ENCODE measurements at regions of chr10 and their contacts with region 1.

Region 1: GRCh38 chr10:15419279-15419874 is 48.3 kb upstream of the FAM171A1 start:
- DNase-seq: peak; percentile 71
- H3K4me3 ChIP-seq: no peak overlapping the region
- H3K27ac ChIP-seq: no peak overlapping the region
- H3K4me1 ChIP-seq: no peaks in the 10 kb centered on the region
- H3K27me3 ChIP-seq: peaks cover 0 to 2% of the 10 kb centered on the region in 2 experiments
- CTCF ChIP-seq: peak; percentile 71 to 74
- POLR2A ChIP-seq: no peak

Region 2: DNA sequence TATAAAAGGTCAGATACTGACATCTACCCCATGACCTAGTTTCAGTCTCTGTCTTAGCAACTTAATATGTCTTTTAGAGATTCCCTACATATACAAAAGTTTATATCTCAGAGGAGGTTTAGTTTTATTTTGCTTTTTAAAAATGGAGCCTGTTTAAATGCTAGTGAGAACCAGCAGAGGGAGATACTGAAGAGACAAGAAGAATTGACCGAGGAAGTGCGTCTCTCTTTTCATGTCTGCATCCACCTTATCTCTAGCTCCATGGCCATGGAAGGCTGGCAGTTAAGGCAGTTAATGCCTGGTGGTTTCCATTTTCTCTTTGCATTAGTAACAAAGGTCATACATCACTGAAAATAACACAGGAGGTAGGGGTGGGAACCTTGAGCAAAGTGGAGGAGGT is 530.1 kb before region 1 on chr10:
- CTCF ChIA-PET with region 1: no interaction called
- POLR2A ChIA-PET with region 1: no interaction called
- dilution Hi-C with region 1: no loop called
- intact Hi-C with region 1: no loop called
- DNase-seq: peak; percentile 4
- H3K4me3 ChIP-seq: no peak overlapping the region
- H3K27ac ChIP-seq: no peak overlapping the region
- H3K4me1 ChIP-seq: no peaks in the 10 kb centered on the region
- H3K27me3 ChIP-seq: no peaks in the 10 kb centered on the region
- CTCF ChIP-seq: peak in 1 of 2 donors; percentile 16
- POLR2A ChIP-seq: no peak

Region 3: DNA sequence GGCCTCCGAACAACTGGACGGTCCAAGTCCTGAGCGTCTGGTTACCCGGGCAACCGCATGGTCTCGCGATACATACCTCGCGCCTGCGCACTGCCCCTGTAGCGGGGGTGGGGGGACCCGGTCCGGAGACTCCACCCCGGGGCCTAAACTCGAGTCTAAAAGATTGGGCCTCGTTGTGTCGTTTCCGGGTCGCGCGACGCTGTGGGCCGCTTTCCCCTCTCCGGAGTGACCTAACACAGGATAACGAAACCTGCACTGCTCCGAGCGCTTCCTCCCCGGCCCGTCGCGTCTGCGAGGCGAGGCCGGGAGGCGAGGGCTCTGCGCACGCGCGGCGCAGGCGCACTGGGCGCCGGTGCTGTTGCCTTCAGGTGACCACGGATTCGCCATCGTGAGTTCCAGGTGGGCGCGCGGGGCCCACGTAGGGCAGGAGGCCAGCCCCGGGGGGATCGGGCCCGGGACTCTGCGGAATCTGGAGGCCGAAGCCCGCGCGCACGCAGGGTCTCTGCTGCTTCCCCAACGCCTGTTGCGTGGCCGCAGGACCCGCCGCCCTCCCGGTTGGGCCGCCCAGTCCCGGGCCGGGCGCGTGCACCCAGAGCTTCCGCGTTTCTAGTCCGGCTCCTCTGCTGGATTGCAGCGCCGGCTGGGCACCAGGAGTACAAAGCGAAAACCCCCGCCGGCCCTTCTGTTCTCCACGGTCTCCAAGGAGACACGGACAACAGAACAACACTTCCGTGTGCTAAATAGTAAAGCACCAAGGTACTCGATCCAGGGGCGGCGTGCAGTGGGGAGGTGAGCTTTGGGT is 322.2 kb before region 1 on chr10 and contains the start of gene RPP38:
- CTCF ChIA-PET with region 1: no interaction called
- POLR2A ChIA-PET with region 1: no interaction called
- dilution Hi-C with region 1: no loop called
- intact Hi-C with region 1: loop called (anchors 1 kb)
- DNase-seq: peak; percentile 97
- H3K4me3 ChIP-seq: peak within 1 kb of the TSS; percentile 75 to 98 (median 80)
- H3K27ac ChIP-seq: peak within 1 kb of the TSS; percentile 66
- H3K4me1 ChIP-seq: peaks cover 12% of the 10 kb centered on the region
- H3K27me3 ChIP-seq: no peaks in the 10 kb centered on the region
- CTCF ChIP-seq: no peak
- POLR2A ChIP-seq: peak; percentile 79
- total RNA-seq, gene RPP38: 10.3 and 10.6 TPM in 2 replicates

Measured in endothelial cell of umbilical vein (primary cell).